ENCODE measurements at regions of chr10 and their contacts with region 1.

Region 1: GRCh38 chr10:110547139-110547761 is 20.2 kb upstream of the SMC3 start:
- DNase-seq: no peak
- ATAC-seq: peak; percentile 69
- H3K4me3 ChIP-seq: no peak overlapping the region
- H3K4me1 ChIP-seq: no peaks in the 10 kb centered on the region
- CTCF ChIP-seq: peak; percentile 64

Region 2: GRCh38 chr10:110304780-110305421 is 242.3 kb before region 1 on chr10 and contains the start of gene SMNDC1:
- intact Hi-C with region 1: loop called (anchors 5 kb)
- DNase-seq: peak; percentile 98 to 100 (median 99)
- ATAC-seq: peak; percentile 97
- H3K4me3 ChIP-seq: peak within 1 kb of the TSS; percentile 91
- H3K4me1 ChIP-seq: peaks cover 25% of the 10 kb centered on the region
- CTCF ChIP-seq: peak; percentile 15
- total RNA-seq, gene SMNDC1: 19.3 to 30.1 (median 24.8) TPM

Region 3: DNA sequence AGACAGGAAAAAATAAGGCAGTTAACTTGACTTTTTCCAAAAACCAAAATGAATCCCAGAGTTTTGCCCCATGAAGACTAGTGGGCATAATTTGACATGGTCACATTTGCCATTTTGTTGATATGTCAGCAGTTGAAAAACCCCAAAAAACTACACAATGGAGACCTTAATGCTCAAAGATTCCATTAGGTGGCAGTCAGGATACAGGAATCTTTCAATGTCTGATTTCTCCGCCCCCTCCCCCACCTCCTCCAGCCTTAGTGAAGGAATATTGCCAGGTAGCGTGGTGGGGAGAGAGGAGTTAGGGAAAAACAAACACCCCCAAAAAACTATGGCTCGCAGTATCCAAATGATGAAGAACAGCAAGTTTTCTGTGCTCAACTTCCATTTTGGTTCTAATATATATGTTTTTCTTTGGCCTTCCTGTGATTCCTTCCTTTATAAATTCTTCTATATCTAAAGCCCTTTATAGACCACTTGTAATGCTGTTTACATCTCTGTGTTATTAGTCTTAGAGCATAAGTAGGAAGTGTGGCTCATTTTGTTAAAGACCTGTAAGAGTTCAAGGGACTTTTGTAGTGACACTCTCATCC is 235.8 kb before region 1 on chr10:
- intact Hi-C with region 1: loop called (anchors 5 kb)
- DNase-seq: peak in 2 of 3 donors; percentile 37 to 80
- ATAC-seq: peak; percentile 74
- H3K4me3 ChIP-seq: no peak overlapping the region
- H3K4me1 ChIP-seq: no peaks in the 10 kb centered on the region
- CTCF ChIP-seq: peak; percentile 13

Region 4: DNA sequence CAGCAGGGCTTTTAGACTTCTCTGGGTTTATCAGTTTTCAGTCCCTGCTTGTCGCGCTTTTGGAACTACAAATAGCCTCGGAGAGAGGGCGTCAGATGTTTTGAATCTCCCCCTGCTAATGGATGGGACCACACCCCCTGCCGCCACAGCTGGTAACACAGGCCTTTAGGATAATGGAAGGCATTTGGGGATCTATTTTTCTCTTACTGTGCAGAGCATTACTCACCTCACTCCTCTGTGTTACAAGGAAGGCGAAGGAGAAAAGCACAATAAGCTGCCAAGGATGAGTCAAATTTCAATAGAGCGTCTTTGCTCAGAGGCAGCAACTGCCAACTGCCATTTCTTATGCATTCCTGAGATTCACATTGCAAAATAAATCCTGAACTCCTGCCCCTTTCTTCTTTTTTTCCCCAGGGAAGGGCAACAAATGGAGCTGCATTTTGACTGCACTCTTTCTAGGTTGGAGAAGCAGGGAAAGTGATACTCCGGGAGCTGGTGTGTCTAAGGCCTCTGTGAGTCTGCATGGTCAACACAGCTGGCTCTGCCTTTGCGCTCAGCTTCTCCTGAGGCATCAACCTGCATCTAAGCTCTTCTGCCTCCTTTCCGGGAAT is 211.0 kb before region 1 on chr10:
- intact Hi-C with region 1: loop called in 1 of 2 experiments (anchors 10 kb)
- DNase-seq: no peak
- ATAC-seq: no peak
- H3K4me3 ChIP-seq: no peak overlapping the region
- H3K4me1 ChIP-seq: no peaks in the 10 kb centered on the region
- CTCF ChIP-seq: no peak

Region 5: DNA sequence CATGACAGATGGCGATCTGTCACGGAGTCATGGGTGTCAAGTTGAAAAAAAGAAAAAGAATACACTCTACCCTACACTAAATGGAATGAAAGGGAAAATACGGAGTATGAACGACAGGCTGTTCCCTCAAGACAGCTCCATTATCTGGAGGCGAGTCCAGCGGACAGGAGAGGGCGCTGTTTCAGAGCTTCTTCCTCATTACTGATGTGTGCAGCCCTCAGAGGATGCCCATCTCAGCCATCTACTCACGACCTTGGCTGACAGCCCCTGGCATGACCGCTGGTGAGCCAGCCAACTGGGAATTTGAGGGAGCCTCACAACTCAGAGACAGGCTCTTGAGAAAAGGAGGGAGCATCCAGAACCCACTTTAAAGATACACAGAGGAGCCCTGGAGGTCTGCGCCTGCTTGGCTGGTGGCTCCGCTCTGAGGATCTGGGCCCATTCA is 192.9 kb before region 1 on chr10:
- intact Hi-C with region 1: loop called in 1 of 2 experiments (anchors 5 kb)
- DNase-seq: peak; percentile 81 to 96 (median 83)
- ATAC-seq: peak; percentile 73
- H3K4me3 ChIP-seq: no peak overlapping the region
- H3K4me1 ChIP-seq: no peaks in the 10 kb centered on the region
- CTCF ChIP-seq: peak; percentile 56

Measured in mucosa of descending colon (tissue), 3 donors.